Activated CD8-positive, alpha-beta T cell treated with anti-CD3 and anti-CD28 coated beads for 36 hours (primary cell): ENCODE measurements at regions of chr13 and their contacts with region 1.

Region 1: GRCh38 chr13:114268344-114269280 is 12.8 kb upstream of the UPF3A start:
- DNase-seq: peak; percentile 53
- ATAC-seq: peak; percentile 72
- H3K4me3 Mint-ChIP-seq: no peak overlapping the region
- H3K27ac Mint-ChIP-seq: peak overlapping the region; percentile 83
- H3K4me1 Mint-ChIP-seq: peaks cover 21% of the 10 kb centered on the region
- H3K27me3 Mint-ChIP-seq: no peaks in the 10 kb centered on the region
- CTCF ChIP-seq: no peak

Region 2: DNA sequence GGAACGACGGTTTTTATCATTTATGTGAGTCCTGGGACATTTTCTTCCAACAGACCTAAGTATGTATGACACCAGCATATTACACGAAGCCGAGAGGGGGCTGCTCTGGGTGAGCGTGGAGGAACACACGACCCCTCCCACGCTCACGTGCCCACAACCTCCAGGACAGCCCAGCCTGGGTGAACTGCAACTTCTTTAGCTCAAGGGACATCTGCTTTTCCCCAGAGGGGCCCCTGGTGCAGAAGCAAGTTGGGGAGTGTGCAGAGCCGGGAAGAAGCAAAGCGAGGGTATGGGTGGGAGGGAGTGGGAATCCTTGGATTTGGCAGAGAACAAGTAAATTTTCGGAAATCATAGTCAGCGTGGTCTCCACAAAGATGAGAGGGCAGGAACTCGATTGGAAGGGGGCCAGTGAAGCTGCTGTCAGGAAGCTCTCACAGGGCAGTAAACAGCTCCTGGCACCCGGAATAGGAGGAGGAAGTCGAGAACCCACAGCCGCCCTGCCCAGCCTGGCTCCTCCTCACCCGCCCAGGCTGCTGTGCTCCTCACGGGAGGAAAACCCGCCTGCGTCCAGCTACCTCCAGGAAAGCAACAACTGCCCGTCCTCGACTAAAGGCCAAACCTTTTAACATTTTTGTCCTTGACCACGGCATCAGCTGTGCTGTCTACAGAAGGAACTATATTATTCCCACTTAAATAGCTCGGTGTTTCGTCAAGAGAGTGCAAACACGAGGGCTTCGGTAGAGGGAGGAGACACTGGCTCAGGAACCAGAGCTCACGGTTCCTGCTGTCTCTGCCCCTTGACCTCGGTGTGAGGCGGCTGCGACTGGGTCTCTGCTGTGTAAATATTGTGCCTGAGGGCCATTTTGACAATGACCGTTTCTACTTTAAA is 106.7 kb before region 1 on chr13:
- CTCF ChIA-PET with region 1: no interaction called
- POLR2A ChIA-PET with region 1: no interaction called
- intact Hi-C with region 1: no loop called
- DNase-seq: no peak
- ATAC-seq: peak; percentile 54
- H3K4me3 Mint-ChIP-seq: peak overlapping the region; percentile 53
- H3K27ac Mint-ChIP-seq: peak overlapping the region; percentile 79
- H3K4me1 Mint-ChIP-seq: peaks cover 62% of the 10 kb centered on the region
- H3K27me3 Mint-ChIP-seq: no peaks in the 10 kb centered on the region
- CTCF ChIP-seq: no peak

Region 3: GRCh38 chr13:114281351-114282040 is 12.9 kb after region 1 on chr13 and contains the start of gene UPF3A:
- CTCF ChIA-PET with region 1: no interaction called
- POLR2A ChIA-PET with region 1: interaction called, 19 read pairs
- intact Hi-C with region 1: no loop called
- DNase-seq: peak; percentile 94
- ATAC-seq: peak; percentile 83
- H3K4me3 Mint-ChIP-seq: peak within 1 kb of the TSS; percentile 77
- H3K27ac Mint-ChIP-seq: peak within 1 kb of the TSS; percentile 94
- H3K4me1 Mint-ChIP-seq: peaks cover 53% of the 10 kb centered on the region
- H3K27me3 Mint-ChIP-seq: no peaks in the 10 kb centered on the region
- CTCF ChIP-seq: no peak
- total RNA-seq, gene UPF3A: 36.7 TPM

Region 4: DNA sequence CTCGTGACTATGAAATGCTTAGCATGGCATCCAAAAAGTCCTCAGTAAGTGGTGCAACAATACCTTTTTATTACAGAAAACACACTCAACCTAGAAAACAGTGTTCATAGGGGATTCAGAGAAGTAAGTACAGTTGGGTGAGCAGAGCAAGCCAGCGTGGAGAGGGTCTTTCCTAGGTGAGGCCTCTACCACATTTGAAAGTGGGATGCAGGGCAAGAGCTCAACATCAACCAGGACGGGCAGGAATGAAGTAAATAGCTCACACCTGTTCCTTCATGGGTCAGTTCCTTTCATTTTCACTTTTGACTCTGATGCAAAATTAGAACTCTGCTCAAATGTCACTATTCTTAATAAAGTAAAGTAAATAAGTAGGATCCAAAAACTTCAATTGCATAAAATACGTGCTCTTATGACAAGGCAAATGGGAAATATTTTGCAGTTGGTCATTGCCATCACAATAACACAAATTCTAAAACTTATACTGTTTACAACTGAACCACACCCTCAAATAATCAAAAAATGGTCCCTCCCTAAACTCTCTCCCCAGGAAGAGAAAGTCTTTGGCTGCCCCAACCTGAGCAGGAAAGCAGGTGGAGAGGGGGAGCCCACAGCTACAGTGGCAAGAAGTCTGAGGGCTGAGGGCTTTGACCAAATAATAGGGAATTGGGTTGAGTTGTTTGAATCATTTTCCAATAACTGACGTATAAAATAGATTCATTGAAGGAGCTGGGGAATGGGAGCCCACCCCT is 65.9 kb after region 1 on chr13:
- CTCF ChIA-PET with region 1: no interaction called
- POLR2A ChIA-PET with region 1: no interaction called
- intact Hi-C with region 1: no loop called
- DNase-seq: no peak
- ATAC-seq: no peak
- H3K4me3 Mint-ChIP-seq: no peak overlapping the region
- H3K27ac Mint-ChIP-seq: no peak overlapping the region
- H3K4me1 Mint-ChIP-seq: peaks cover 9% of the 10 kb centered on the region
- H3K27me3 Mint-ChIP-seq: no peaks in the 10 kb centered on the region
- CTCF ChIP-seq: no peak